Aorta (tissue), 5 donors: ENCODE measurements at regions of chr9 and their contacts with region 1.

Region 1: DNA sequence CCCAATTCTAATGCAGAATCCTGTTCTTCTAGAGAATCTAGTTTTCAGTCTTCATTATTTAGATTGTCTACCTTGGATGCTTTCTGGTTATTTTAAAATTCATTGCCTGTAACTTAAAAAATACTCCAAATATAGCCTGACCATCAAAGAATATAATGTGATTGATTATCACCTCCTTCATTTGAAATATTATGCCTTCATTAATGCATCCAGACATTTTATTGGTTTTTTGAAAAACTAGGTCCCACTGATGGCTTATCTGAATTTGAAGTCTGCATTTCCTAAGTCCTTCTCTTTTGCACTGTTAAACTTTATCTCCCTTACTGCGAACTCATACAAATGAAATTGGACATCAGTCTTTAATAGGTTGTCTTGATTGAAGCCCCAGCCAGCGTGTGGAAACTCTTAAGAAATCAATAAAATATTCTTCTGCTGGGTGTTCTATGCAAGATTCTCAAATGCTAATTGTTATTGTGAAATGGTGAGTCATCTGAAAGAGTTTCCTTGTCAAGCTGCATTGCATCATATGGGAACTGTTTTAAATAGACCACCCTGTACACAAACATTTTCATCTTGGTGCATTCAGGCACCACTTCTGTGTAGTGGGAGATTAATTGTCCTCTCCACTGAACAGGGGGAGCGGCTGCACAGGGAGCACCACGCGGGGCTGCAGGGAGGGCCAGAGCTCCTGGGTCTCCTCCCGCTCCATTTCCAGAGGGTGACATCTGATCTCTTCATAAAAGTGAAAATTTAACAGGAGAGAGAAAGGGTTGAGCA is 92.3 kb upstream of the FANCC start:
- DNase-seq: no peak
- ATAC-seq: peak; percentile 79
- H3K4me3 ChIP-seq: no peak overlapping the region
- H3K27ac ChIP-seq: no peak overlapping the region
- H3K4me1 ChIP-seq: no peaks in the 10 kb centered on the region
- H3K27me3 ChIP-seq: no peaks in the 10 kb centered on the region

Region 2: GRCh38 chr9:95383185-95383673 is 26.6 kb before region 1 on chr9:
- intact Hi-C with region 1: no loop called
- DNase-seq: no peak
- ATAC-seq: no peak
- H3K4me3 ChIP-seq: no peak overlapping the region
- H3K27ac ChIP-seq: no peak overlapping the region
- H3K4me1 ChIP-seq: peaks cover 0 to 4% of the 10 kb centered on the region in 2 donors
- H3K27me3 ChIP-seq: no peaks in the 10 kb centered on the region

Region 3: GRCh38 chr9:95477441-95477840 is 67.6 kb after region 1 on chr9:
- intact Hi-C with region 1: no loop called
- DNase-seq: no peak
- ATAC-seq: no peak
- H3K4me3 ChIP-seq: no peak overlapping the region
- H3K27ac ChIP-seq: no peak overlapping the region
- H3K4me1 ChIP-seq: no peaks in the 10 kb centered on the region
- H3K27me3 ChIP-seq: no peaks in the 10 kb centered on the region

Region 4: DNA sequence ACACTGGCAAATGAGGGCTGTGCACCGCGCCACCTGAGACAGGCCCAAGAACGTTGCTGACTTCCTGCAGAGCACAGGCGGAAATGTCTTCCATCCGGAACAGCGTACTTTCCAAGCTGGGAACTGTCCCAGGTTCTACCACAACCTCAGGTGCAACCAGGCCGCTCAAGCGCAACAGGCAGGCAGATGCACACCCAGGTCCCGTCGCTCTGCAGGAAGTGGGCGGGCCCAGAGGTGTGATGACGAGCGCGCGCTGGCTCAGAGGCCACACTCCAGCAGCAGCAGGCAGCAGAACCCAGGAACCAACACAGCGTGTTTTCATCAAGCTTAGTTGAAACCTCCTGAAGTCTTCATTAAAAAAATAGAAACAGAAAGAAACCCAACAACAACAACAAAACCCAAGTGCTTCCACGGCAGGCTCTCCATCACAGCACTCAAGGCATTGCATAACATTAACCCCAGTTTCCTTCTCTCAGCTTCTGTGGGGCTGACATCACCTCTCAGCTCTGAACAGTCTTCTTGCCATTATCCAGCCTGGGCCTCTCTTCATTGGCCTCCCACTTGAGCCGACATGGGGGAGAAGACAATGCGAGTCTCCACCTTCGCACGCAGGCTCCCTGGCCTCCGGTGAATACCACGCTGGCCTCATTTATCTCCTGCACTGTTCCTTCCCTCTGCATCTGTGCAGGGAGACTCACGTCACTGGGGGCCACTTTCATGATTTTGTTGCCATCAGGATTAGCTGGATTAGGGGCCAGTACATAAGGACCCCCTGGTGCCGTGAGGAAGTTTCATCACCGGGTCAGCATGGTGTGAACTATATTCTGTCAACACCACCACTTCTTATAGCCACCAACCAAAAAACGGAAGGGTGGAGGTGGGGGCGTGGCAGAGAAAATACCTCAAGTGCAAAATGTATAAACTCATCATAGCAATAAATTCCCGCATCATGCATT is 84.9 kb after region 1 on chr9:
- intact Hi-C with region 1: no loop called
- DNase-seq: no peak
- ATAC-seq: no peak
- H3K4me3 ChIP-seq: no peak overlapping the region
- H3K27ac ChIP-seq: no peak overlapping the region
- H3K4me1 ChIP-seq: no peaks in the 10 kb centered on the region
- H3K27me3 ChIP-seq: no peaks in the 10 kb centered on the region

Region 5: DNA sequence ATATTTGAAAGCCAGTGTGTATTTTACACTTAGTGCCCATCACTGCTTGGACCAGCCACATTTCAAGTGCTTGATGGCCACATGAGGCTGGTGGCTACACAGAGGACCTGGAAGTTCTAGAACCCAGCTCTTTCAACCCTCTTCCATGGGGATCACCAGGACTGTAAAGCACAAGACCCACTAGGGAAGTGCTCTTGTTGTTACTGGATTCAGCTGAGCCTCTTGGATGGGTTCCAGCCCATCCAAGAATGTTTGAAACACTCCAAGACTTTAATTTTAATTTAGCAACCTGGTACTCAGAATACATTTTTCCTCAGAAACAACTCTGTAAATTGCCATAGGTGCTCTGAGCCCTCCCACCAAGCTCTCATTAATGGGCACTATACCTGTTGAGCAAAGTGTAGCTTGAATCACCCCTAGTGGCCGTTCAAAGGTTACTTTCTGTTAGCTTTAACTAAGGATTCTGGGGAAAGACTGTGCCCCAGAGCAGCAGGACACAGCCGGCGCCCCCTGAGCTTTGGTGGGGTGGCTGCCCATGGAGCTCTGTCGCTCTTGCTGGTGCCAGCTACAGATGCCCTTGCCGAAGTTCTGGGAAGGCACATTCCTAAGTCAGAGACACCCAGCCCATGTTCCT is 679.7 kb after region 1 on chr9:
- intact Hi-C with region 1: loop called in 1 of 2 experiments (anchors 5 kb)
- DNase-seq: no peak
- ATAC-seq: no peak
- H3K4me3 ChIP-seq: no peak overlapping the region
- H3K27ac ChIP-seq: no peak overlapping the region
- H3K4me1 ChIP-seq: no peaks in the 10 kb centered on the region
- H3K27me3 ChIP-seq: no peaks in the 10 kb centered on the region